Natural killer cell (primary cell): ENCODE measurements at regions of chr19 and their contacts with region 1.

Region 1: DNA sequence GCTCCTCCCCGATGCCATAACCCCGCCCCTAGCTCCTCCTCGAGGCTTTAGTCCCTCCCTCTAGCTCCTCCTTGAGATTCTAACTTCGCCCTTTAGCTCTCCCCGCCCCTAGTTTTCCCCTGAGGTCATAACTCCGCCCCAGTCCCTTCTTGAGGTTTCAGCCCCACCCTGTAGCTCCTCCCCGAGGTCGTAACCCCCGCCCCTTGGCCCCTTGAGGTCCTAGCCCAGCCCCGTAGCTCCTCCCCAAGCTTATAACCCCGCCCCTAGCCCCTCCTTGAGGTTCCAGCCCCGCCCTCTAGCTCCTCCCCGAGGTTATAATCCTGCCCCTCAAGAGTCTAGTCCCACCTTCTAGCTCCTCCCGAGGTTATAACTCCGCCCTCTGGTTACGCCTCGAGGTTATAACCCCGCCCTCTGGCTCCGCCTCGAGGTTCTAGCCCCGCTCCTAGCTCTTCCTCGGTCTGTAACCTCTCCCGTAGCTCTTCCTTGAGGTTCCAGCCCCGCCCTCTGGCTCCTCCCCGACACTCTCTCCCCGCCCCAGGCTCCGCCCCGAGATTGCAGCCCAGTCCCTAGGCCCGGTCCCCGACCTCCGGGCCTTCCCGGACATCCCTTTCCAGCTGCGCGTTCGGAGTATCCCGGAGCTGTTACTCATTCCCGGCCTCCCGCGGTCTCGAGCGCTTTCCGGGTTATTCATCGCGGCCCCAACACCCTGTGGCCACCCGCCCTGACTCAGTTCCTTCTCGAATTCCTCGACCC is 1.4 kb downstream of the PLAUR start:
- DNase-seq: peak; percentile 87 to 97
- ATAC-seq: peak; percentile 86 to 95 (median 86)
- H3K4me3 ChIP-seq: peak overlapping the region; percentile 71
- H3K4me3 Mint-ChIP-seq: peak overlapping the region; percentile 94
- H3K27ac ChIP-seq: peak overlapping the region; percentile 48
- H3K27ac Mint-ChIP-seq: peak overlapping the region; percentile 68 to 84
- H3K4me1 ChIP-seq: peaks cover 47% of the 10 kb centered on the region
- H3K4me1 Mint-ChIP-seq: peaks cover 44 to 47% of the 10 kb centered on the region in 2 donors
- H3K27me3 ChIP-seq: peaks cover 3% of the 10 kb centered on the region
- H3K27me3 Mint-ChIP-seq: peaks cover 0 to 7% of the 10 kb centered on the region in 2 donors
- CTCF ChIP-seq: no peak

Region 2: DNA sequence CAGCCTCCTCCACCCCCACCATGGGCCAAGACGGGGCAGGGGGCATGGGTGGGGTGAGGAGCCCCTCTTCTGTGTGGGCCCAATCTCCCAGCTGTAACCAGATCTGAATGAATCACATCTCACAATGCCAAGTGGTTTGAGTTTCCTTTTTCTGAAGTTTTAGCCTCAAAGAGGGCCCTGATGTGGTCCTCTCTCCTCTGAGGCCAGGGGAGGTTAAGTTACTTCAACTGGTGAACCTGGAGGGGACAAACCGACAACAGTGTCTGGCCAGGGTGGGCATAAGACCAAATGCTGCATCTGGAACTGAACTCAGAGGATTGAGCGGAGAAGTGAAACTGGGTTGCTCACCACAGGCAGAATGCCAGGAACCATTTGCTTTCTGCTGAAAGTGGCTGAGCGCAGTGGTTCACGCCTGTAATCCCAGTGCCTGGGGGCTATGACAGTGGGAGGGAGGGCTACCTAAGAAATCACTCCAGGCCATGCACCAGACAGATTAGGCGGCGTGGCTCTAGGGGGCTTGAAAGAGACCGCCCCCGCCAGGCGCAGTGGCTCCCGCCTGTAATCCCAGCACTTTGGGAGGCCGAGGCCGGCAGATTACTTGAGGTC is 31.9 kb after region 1 on chr19:
- intact Hi-C with region 1: loop called (anchors 2 kb)
- DNase-seq: peak; percentile 15 to 35
- ATAC-seq: no peak
- H3K4me3 ChIP-seq: no peak overlapping the region
- H3K4me3 Mint-ChIP-seq: peak overlapping the region; percentile 90
- H3K27ac ChIP-seq: peak overlapping the region; percentile 77
- H3K27ac Mint-ChIP-seq: peak overlapping the region; percentile 92 to 98
- H3K4me1 ChIP-seq: peaks cover 27% of the 10 kb centered on the region
- H3K4me1 Mint-ChIP-seq: peaks cover 20 to 22% of the 10 kb centered on the region in 2 donors
- H3K27me3 ChIP-seq: no peaks in the 10 kb centered on the region
- H3K27me3 Mint-ChIP-seq: peaks cover 3 to 10% of the 10 kb centered on the region in 2 donors
- CTCF ChIP-seq: no peak

Region 3: DNA sequence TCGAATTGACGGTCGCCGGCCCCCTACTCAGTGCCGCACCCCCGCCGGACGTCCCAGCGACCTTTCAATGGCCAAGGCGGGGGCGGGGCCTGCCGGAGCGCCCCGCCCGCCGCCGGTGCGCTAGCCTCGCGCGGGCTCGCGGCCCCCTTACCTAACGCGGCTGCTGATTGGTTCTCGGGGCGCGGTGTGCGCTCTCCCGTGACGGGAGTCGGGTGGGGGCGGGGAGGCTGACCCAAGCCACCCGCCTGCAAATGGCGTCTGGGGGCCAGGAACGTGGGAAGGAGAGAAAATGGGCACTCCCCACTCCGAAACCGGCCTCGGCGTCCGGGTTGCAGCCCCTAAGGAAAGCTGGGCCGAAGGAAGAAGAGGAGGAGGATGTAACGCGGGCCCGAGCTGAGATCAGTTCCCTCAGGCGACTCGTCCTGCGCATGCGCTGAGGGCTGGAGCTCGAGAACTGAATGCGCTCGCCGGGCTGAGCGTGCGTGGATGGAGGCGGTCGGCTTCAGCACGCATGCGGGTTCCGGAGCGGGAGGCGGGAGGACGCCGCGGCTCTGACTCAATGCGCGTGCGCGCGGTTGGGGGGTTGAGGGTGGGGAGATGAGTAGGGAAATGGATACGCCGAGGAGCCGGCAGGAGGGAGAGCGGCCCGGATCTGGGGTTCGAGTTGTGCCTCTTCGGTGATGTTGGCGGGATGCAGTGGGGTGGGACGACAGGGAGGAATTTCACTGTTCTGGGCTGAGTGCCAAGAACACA is 86.1 kb after region 1 on chr19 and contains the start of gene SMG9:
- intact Hi-C with region 1: loop called (anchors 2 kb)
- DNase-seq: peak; percentile 99 to 100
- ATAC-seq: peak; percentile 88 to 95 (median 89)
- H3K4me3 ChIP-seq: peak within 1 kb of the TSS; percentile 83
- H3K4me3 Mint-ChIP-seq: peak within 1 kb of the TSS; percentile 99
- H3K27ac ChIP-seq: peak within 1 kb of the TSS; percentile 97
- H3K27ac Mint-ChIP-seq: peak within 1 kb of the TSS; percentile 99 to 100
- H3K4me1 ChIP-seq: peaks cover 25% of the 10 kb centered on the region
- H3K4me1 Mint-ChIP-seq: peaks cover 26 to 36% of the 10 kb centered on the region in 2 donors
- H3K27me3 ChIP-seq: no peaks in the 10 kb centered on the region
- H3K27me3 Mint-ChIP-seq: peaks cover 0 to 2% of the 10 kb centered on the region in 2 donors
- CTCF ChIP-seq: no peak
- total RNA-seq, gene SMG9: 23.3 to 37.4 (median 28.3) TPM

Region 4: DNA sequence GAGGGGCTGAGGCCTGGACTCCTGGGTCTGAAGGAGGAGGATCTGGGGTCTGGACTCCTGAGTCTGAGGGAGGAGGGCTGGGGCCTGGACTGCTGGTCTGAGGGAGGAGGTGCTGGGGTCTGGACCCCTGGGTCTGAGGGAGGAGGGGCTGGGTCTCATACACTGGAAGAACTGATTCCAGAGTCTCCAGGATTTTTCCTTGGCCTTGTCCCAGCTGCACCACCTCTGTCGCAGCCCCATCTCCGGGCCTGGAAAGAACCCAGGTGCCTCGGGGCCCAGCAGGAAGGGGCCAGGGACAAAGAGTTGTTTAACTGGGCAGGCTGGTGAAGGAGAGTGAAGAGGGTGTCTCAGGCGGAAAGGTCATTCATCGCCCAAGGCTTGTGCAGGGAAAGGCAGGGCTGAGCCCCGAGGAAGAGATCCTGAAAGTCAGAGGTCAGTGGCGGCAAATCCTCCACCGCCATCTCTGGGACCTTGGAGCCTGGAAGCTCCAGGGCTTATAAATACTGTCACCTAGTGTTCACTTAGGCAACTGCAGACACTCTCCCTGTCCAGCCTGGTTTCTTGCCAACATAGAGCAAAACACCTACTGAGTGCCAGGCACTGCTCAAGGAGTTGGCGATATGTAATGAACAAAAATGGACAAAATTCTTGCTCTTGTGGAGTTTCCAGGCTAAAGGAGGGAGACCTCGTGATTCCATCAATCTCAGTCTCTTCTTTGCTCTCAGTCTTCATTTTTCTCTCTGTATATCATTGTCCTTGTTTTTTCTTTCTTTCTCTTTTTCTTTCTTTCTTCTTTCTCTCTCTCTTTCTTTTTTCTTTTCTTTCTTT is 116.6 kb after region 1 on chr19:
- intact Hi-C with region 1: loop called (anchors 1 kb)
- DNase-seq: peak in 1 of 2 donors; percentile 85
- ATAC-seq: peak; percentile 78 to 90 (median 85)
- H3K4me3 ChIP-seq: no peak overlapping the region
- H3K4me3 Mint-ChIP-seq: no peak overlapping the region
- H3K27ac ChIP-seq: peak overlapping the region; percentile 49
- H3K27ac Mint-ChIP-seq: no peak overlapping the region
- H3K4me1 ChIP-seq: peaks cover 20% of the 10 kb centered on the region
- H3K4me1 Mint-ChIP-seq: peaks cover 0 to 6% of the 10 kb centered on the region in 2 donors
- H3K27me3 ChIP-seq: no peaks in the 10 kb centered on the region
- H3K27me3 Mint-ChIP-seq: peaks cover 23 to 35% of the 10 kb centered on the region in 2 donors
- CTCF ChIP-seq: peak; percentile 92